ENCODE measurements at regions of chr22 and their contacts with region 1.

Region 1: GRCh38 chr22:40396882-40397281 is 26.5 kb downstream of the SGSM3 start:
- DNase-seq: no peak
- ATAC-seq: no peak
- H3K4me3 Mint-ChIP-seq: no peak overlapping the region
- H3K27ac Mint-ChIP-seq: no peak overlapping the region
- H3K4me1 Mint-ChIP-seq: peaks cover 55% of the 10 kb centered on the region
- H3K27me3 Mint-ChIP-seq: no peaks in the 10 kb centered on the region

Region 2: DNA sequence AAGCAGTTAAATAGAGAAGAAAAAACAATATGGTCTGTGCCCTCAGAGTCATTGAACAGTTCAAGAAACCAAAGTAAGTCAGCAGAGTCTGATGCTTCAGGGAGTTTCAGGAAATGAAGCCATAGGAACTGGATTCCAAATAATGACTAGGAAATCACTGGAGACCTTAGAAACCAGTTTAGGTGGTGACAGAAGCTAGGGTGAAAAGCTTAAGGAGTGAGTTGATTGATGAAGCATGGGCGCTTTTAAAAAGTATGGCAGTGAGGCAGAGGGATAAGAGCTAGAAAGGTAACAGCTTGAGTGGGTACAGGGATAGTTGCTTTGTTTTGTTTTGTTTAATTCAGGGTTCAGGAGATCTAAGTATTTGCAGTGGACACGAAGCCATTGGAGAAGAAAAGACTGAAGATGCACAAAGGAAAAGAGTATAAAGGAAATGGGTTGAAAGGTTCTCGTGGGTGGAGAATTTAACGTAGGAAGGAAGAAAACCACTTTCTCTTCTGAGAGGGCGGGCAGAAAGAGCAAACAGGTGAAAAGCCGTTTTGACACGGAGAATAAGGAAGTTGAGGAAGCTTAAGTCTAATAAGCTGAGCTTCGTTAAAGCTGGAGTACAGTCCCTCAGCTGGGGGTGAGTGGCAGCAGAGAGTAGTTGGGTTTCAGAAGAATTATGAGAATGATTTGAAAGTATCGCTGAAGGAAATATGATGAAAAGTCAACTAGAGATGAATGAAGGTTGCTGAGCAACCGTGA is 11.7 kb before region 1 on chr22:
- CTCF ChIA-PET with region 1: interaction called, 30 read pairs
- POLR2A ChIA-PET with region 1: interaction called, 6 read pairs
- DNase-seq: peak; percentile 63
- ATAC-seq: peak; percentile 84
- H3K4me3 Mint-ChIP-seq: peak overlapping the region; percentile 71
- H3K27ac Mint-ChIP-seq: peak overlapping the region; percentile 95
- H3K4me1 Mint-ChIP-seq: peaks cover 45% of the 10 kb centered on the region
- H3K27me3 Mint-ChIP-seq: no peaks in the 10 kb centered on the region